HepG2 (cell line): ENCODE measurements at regions of chr11 and their contacts with region 1.

Region 1: GRCh38 chr11:17384002-17384511 is 4.4 kb downstream of the KCNJ11 start:
- DNase-seq: peak; percentile 81
- ATAC-seq: peak; percentile 57
- H3K4me3 ChIP-seq: no peak overlapping the region
- H3K27ac ChIP-seq: no peak overlapping the region
- H3K4me1 ChIP-seq: no peaks in the 10 kb centered on the region
- H3K27me3 ChIP-seq: no peaks in the 10 kb centered on the region
- CTCF ChIP-seq: peak; percentile 92
- EP300 ChIP-seq: no peak
- POLR2A ChIP-seq: no peak
- RAD21 ChIP-seq: peak; percentile 83

Region 2: GRCh38 chr11:17230867-17231851 is 152.9 kb before region 1 on chr11:
- CTCF ChIA-PET with region 1: interaction called, 7 read pairs
- POLR2A ChIA-PET with region 1: no interaction called
- in situ Hi-C with region 1: no loop called
- intact Hi-C with region 1: loop called (anchors 1 kb)
- DNase-seq: no peak
- ATAC-seq: no peak
- H3K4me3 ChIP-seq: no peak overlapping the region
- H3K27ac ChIP-seq: no peak overlapping the region
- H3K4me1 ChIP-seq: 0 out of 2 replicates have a peak, but pooled peaks cover 5% of the 10 kb centered on the region
- H3K27me3 ChIP-seq: no peaks in the 10 kb centered on the region
- CTCF ChIP-seq: no peak
- EP300 ChIP-seq: no peak
- POLR2A ChIP-seq: no peak
- RAD21 ChIP-seq: no peak

Region 3: GRCh38 chr11:17371614-17372013 is 12.4 kb before region 1 on chr11:
- CTCF ChIA-PET with region 1: no interaction called
- POLR2A ChIA-PET with region 1: no interaction called
- in situ Hi-C with region 1: no loop called
- intact Hi-C with region 1: no loop called
- DNase-seq: no peak
- ATAC-seq: no peak
- H3K4me3 ChIP-seq: no peak overlapping the region
- H3K27ac ChIP-seq: no peak overlapping the region
- H3K4me1 ChIP-seq: no peaks in the 10 kb centered on the region
- H3K27me3 ChIP-seq: no peaks in the 10 kb centered on the region
- CTCF ChIP-seq: no peak
- EP300 ChIP-seq: no peak
- POLR2A ChIP-seq: no peak
- RAD21 ChIP-seq: no peak

Region 4: DNA sequence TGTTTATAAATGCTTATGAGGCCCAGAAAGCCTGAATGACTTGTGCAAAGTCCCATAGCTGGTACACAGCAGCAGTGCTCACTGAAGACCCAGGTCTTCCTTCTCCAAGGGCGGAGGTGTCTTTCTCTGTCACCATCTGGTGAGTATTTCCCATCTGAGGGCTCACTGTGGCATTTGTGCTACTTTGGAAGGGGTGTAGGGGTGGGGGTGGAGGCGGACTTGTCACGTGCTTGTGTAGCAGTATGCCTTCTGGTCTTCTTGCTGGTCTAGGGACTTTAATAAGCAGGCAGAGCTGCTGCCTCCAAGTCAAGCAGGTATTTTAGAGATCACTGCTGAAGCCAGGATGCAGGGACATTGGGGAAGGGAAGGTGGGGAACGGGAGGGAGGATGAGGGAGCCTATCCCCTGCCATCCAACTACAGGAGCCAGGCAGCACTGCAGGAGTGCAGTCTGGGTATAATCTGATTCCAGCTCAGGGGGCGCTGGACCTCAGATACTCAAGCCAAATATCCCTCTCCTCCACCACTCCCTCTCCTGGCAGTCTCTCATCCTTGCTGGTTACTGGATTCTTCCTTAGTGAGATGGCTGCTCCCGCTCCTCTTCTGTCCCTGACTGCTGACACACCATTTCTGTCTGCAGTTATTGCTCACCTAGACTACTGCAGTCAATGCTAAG is 89.2 kb after region 1 on chr11:
- CTCF ChIA-PET with region 1: interaction called, 8 read pairs
- POLR2A ChIA-PET with region 1: no interaction called
- in situ Hi-C with region 1: loop called (anchors 5 kb)
- intact Hi-C with region 1: loop called (anchors 1 kb)
- DNase-seq: peak; percentile 68
- ATAC-seq: peak; percentile 96
- H3K4me3 ChIP-seq: no peak overlapping the region
- H3K27ac ChIP-seq: no peak overlapping the region
- H3K4me1 ChIP-seq: no peaks in the 10 kb centered on the region
- H3K27me3 ChIP-seq: peaks cover 5 to 39% of the 10 kb centered on the region in 2 experiments
- CTCF ChIP-seq: peak; percentile 28; the same call in 1 of the 2 replicates
- EP300 ChIP-seq: no peak
- POLR2A ChIP-seq: no peak
- RAD21 ChIP-seq: peak; percentile 61; the same call in 1 of the 2 replicates

Region 5: GRCh38 chr11:17504330-17505107 is 120.5 kb after region 1 on chr11:
- CTCF ChIA-PET with region 1: interaction called, 34 read pairs
- POLR2A ChIA-PET with region 1: interaction called, 3 read pairs
- in situ Hi-C with region 1: loop called (anchors 5 kb)
- intact Hi-C with region 1: loop called (anchors 1 kb)
- DNase-seq: peak; percentile 45
- ATAC-seq: peak; percentile 83
- H3K4me3 ChIP-seq: no peak overlapping the region
- H3K27ac ChIP-seq: no peak overlapping the region
- H3K4me1 ChIP-seq: no peaks in the 10 kb centered on the region
- H3K27me3 ChIP-seq: peaks cover 1 to 8% of the 10 kb centered on the region in 2 experiments; a peak in 2 of 5 replicates
- CTCF ChIP-seq: peak; percentile 87
- EP300 ChIP-seq: no peak
- POLR2A ChIP-seq: no peak
- RAD21 ChIP-seq: peak; percentile 76

Region 6: GRCh38 chr11:17528181-17528691 is 144.2 kb after region 1 on chr11:
- CTCF ChIA-PET with region 1: interaction called, 13 read pairs
- POLR2A ChIA-PET with region 1: no interaction called
- in situ Hi-C with region 1: no loop called
- intact Hi-C with region 1: loop called (anchors 1 kb)
- DNase-seq: peak; percentile 23
- ATAC-seq: peak; percentile 88
- H3K4me3 ChIP-seq: no peak overlapping the region
- H3K27ac ChIP-seq: no peak overlapping the region
- H3K4me1 ChIP-seq: peaks cover 27% of the 10 kb centered on the region
- H3K27me3 ChIP-seq: peaks cover 0 to 28% of the 10 kb centered on the region in 2 experiments; a peak in 4 of 5 replicates
- CTCF ChIP-seq: peak; percentile 77
- EP300 ChIP-seq: no peak
- POLR2A ChIP-seq: no peak
- RAD21 ChIP-seq: peak; percentile 74